ENCODE measurements at regions of chr17 and their contacts with region 1.

Region 1: DNA sequence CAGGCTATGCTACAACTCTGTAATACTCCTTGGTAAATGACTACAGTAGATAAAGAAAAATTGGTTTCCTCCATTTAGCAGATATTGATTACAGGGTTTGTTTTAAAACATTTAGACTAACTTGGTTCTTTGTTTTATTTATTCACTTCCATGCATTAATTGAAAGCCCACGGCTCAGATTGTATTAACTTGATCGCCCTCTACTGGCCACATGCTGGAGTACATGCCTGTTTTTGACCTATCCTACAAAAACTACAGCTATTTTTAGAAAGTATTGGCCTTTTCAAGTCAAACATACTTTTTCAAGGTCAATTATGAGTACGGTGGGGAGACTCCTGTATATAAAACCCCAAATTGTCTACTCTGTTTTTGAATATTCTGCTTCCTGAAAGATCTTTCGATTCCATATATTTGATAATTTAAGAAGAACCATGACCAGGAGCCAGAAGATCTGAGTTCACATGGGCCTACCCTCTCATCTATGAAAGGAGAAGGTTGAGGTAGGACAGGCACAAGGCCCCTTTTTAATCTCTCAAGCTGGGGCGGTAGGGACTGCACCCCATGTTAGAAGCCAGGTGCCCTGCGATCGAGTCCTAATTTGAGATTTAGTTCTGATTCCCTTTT is 51.8 kb downstream of the CA10 start:
- DNase-seq: peak; percentile 33
- ATAC-seq: peak; percentile 68
- H3K4me3 ChIP-seq: no peak overlapping the region
- H3K27ac ChIP-seq: no peak overlapping the region
- H3K4me1 ChIP-seq: no peaks in the 10 kb centered on the region
- H3K27me3 ChIP-seq: no peaks in the 10 kb centered on the region
- CTCF ChIP-seq: peak; percentile 77
- EP300 ChIP-seq: no peak
- POLR2A ChIP-seq: no peak
- RAD21 ChIP-seq: no peak

Region 2: GRCh38 chr17:51585514-51586104 is 521.1 kb before region 1 on chr17:
- CTCF ChIA-PET with region 1: no interaction called
- POLR2A ChIA-PET with region 1: no interaction called
- in situ Hi-C with region 1: no loop called
- intact Hi-C with region 1: loop called (anchors 2 kb)
- DNase-seq: peak; percentile 30
- ATAC-seq: peak; percentile 90
- H3K4me3 ChIP-seq: no peak overlapping the region
- H3K27ac ChIP-seq: no peak overlapping the region
- H3K4me1 ChIP-seq: no peaks in the 10 kb centered on the region
- H3K27me3 ChIP-seq: no peaks in the 10 kb centered on the region
- CTCF ChIP-seq: peak; percentile 80
- EP300 ChIP-seq: no peak
- POLR2A ChIP-seq: no peak
- RAD21 ChIP-seq: peak; percentile 57

Region 3: DNA sequence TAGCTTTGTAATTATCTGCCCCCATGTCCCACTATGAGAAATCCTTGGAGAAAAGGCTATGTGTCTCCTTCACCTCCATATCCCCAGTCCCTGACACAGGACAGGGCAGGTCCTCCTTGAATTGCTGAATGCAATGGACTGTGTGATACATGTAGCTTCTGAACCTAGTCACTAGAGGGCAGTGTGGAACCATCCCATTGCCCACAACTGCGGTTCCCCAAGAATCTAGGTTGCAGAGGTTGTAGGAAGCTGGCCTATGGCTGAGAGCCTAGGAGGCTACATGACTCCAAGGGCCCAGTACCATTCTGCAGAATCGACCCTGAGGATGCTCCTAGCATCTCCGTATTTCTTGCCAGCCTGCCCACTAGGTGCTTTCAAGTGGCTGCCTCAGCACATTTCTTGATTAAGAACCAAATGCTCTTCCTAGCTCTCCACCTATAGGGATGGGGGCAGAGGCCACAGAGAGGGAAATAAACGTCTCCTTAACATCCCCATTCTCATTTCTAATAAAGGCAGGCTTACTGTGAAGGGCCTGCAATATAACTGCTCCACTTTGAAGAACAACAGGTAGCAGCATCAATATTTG is 342.3 kb before region 1 on chr17:
- CTCF ChIA-PET with region 1: interaction called, 15 read pairs
- POLR2A ChIA-PET with region 1: no interaction called
- in situ Hi-C with region 1: loop called (anchors 10 kb)
- intact Hi-C with region 1: loop called (anchors 1 kb)
- DNase-seq: peak; percentile 60
- ATAC-seq: peak; percentile 100
- H3K4me3 ChIP-seq: no peak overlapping the region
- H3K27ac ChIP-seq: no peak overlapping the region
- H3K4me1 ChIP-seq: no peaks in the 10 kb centered on the region
- H3K27me3 ChIP-seq: no peaks in the 10 kb centered on the region
- CTCF ChIP-seq: peak; percentile 96
- EP300 ChIP-seq: no peak
- POLR2A ChIP-seq: no peak
- RAD21 ChIP-seq: peak; percentile 78

Region 4: GRCh38 chr17:51860954-51861561 is 245.7 kb before region 1 on chr17:
- CTCF ChIA-PET with region 1: no interaction called
- POLR2A ChIA-PET with region 1: no interaction called
- in situ Hi-C with region 1: loop called (anchors 25 kb)
- intact Hi-C with region 1: no loop called
- DNase-seq: peak; percentile 44
- ATAC-seq: peak; percentile 76
- H3K4me3 ChIP-seq: no peak overlapping the region
- H3K27ac ChIP-seq: no peak overlapping the region
- H3K4me1 ChIP-seq: no peaks in the 10 kb centered on the region
- H3K27me3 ChIP-seq: no peaks in the 10 kb centered on the region
- CTCF ChIP-seq: peak; percentile 78
- EP300 ChIP-seq: no peak
- POLR2A ChIP-seq: no peak
- RAD21 ChIP-seq: no peak

Region 5: DNA sequence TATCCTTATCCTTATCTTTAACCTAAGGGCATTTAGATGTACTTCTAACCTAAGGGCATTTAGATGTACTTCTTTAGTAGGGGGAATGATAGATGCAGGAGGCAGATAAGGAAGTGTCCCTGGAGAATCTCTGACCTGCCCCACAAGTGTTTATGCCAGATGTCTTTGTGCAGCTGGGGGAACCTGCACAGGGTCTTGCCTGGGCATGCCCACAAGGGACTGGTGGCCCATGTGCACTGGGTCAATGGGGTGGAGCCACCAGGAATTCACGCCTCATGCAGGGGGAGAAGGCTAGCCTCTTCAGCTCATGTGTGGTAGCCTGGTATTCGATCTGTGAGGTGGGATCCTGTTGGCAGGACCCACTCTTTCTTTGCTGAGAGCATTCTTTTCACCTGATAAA is 13.7 kb after region 1 on chr17:
- CTCF ChIA-PET with region 1: no interaction called
- POLR2A ChIA-PET with region 1: no interaction called
- in situ Hi-C with region 1: no loop called
- intact Hi-C with region 1: no loop called
- DNase-seq: no peak
- ATAC-seq: no peak
- H3K4me3 ChIP-seq: no peak overlapping the region
- H3K27ac ChIP-seq: no peak overlapping the region
- H3K4me1 ChIP-seq: no peaks in the 10 kb centered on the region
- H3K27me3 ChIP-seq: no peaks in the 10 kb centered on the region
- CTCF ChIP-seq: no peak
- EP300 ChIP-seq: no peak
- POLR2A ChIP-seq: no peak
- RAD21 ChIP-seq: no peak